MCF 10A (cell line): ENCODE measurements at regions of chr10 and their contacts with region 1.

Region 1: GRCh38 chr10:75294866-75295701 is 59.3 kb upstream of the COMTD1 start:
- DNase-seq: peak; percentile 91
- H3K4me3 Mint-ChIP-seq: no peak overlapping the region
- H3K27ac Mint-ChIP-seq: no peak overlapping the region
- H3K4me1 Mint-ChIP-seq: no peaks in the 10 kb centered on the region
- H3K27me3 Mint-ChIP-seq: no peaks in the 10 kb centered on the region
- CTCF ChIP-seq: peak; percentile 23

Region 2: DNA sequence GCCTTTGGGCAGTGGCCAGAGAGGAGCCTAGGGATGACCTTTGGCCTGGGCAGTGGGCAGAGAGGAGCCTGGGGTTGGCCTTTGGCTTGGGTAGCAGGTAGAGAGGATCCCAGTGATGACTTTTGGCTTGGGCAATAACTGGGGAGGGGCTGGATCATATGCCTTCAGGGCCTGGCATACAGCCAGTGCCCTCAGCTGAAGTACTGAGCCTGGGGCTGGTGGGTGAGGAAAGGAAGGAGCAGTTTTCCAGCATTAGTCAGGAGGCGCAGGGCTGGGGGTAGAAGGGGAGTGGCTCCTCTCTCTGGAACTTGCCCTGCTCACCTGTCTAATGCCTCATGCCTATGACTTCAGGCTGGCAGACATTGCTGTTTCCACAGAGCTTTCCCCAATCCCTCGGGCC is 44.2 kb before region 1 on chr10:
- CTCF ChIA-PET with region 1: interaction called, 6 read pairs
- POLR2A ChIA-PET with region 1: interaction called, 40 read pairs
- intact Hi-C with region 1: no loop called
- DNase-seq: peak; percentile 92
- H3K4me3 Mint-ChIP-seq: peak overlapping the region; percentile 40
- H3K27ac Mint-ChIP-seq: peak overlapping the region; percentile 91
- H3K4me1 Mint-ChIP-seq: peaks cover 26% of the 10 kb centered on the region
- H3K27me3 Mint-ChIP-seq: no peaks in the 10 kb centered on the region
- CTCF ChIP-seq: no peak

Region 3: GRCh38 chr10:75283671-75284470 is 11.2 kb before region 1 on chr10:
- CTCF ChIA-PET with region 1: interaction called, 4 read pairs
- POLR2A ChIA-PET with region 1: interaction called, 11 read pairs
- intact Hi-C with region 1: no loop called
- DNase-seq: no peak
- H3K4me3 Mint-ChIP-seq: no peak overlapping the region
- H3K27ac Mint-ChIP-seq: no peak overlapping the region
- H3K4me1 Mint-ChIP-seq: no peaks in the 10 kb centered on the region
- H3K27me3 Mint-ChIP-seq: no peaks in the 10 kb centered on the region
- CTCF ChIP-seq: no peak